Activated CD4-positive, alpha-beta T cell treated with anti-CD3 and anti-CD28 coated beads, Interleukin-2, amount 10 ng/mL, durations not matched to agents 7 days and 5 days (primary cell): ENCODE measurements at regions of chr11 and their contacts with region 1.

Region 1: GRCh38 chr11:48055292-48056132 is 75.2 kb downstream of the PTPRJ start:
- DNase-seq: peak; percentile 89
- H3K4me3 Mint-ChIP-seq: peak overlapping the region; percentile 34
- H3K27ac Mint-ChIP-seq: peak overlapping the region; percentile 82
- H3K4me1 Mint-ChIP-seq: peaks cover 90% of the 10 kb centered on the region
- H3K27me3 Mint-ChIP-seq: no peaks in the 10 kb centered on the region

Region 2: DNA sequence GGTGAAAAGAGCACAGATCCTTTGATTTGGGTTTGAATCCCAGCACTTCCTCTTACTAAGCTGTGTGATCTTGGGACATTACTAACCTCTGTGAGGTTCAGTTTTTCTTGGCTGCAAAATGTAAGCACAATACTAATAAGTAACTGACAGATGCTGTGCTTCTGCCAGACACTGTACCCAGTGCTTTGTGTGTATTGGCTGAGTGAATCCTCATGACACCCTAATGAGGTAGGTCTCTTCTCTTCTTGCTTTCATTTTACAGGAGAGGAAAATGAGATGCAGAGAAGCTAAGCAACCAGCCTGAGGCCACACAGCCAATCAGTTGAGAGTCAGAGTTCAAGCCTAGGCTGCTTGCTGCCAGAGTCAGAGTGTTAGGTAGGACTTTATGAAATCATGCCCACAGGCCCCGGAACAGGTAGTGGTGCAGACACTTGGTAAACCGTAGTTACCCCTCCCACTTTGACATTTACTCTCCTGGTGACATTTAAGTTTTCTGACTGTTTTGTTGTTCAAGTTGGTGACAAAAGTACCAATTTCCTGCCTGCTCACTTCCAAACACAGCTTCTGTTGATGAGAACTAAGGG is 54.0 kb before region 1 on chr11:
- CTCF ChIA-PET with region 1: interaction called, 15 read pairs
- POLR2A ChIA-PET with region 1: interaction called, 20 read pairs
- DNase-seq: peak; percentile 95
- H3K4me3 Mint-ChIP-seq: peak overlapping the region; percentile 65
- H3K27ac Mint-ChIP-seq: peak overlapping the region; percentile 98
- H3K4me1 Mint-ChIP-seq: peaks cover 90% of the 10 kb centered on the region
- H3K27me3 Mint-ChIP-seq: no peaks in the 10 kb centered on the region

Region 3: GRCh38 chr11:48020092-48020755 is 35.3 kb before region 1 on chr11:
- CTCF ChIA-PET with region 1: interaction called, 10 read pairs
- POLR2A ChIA-PET with region 1: no interaction called
- DNase-seq: no peak
- H3K4me3 Mint-ChIP-seq: no peak overlapping the region
- H3K27ac Mint-ChIP-seq: peak overlapping the region; percentile 75
- H3K4me1 Mint-ChIP-seq: peaks cover 79% of the 10 kb centered on the region
- H3K27me3 Mint-ChIP-seq: no peaks in the 10 kb centered on the region

Region 4: GRCh38 chr11:48043111-48043990 is 12.2 kb before region 1 on chr11:
- CTCF ChIA-PET with region 1: interaction called, 10 read pairs
- POLR2A ChIA-PET with region 1: no interaction called
- DNase-seq: peak; percentile 59
- H3K4me3 Mint-ChIP-seq: peak overlapping the region; percentile 23
- H3K27ac Mint-ChIP-seq: peak overlapping the region; percentile 79
- H3K4me1 Mint-ChIP-seq: peaks cover 75% of the 10 kb centered on the region
- H3K27me3 Mint-ChIP-seq: no peaks in the 10 kb centered on the region